Activated T-helper 2 cell treated with anti-CD3 and anti-CD28 coated beads, Interferon-gamma antibody, Interleukin-2, Interleukin-4, amounts not matched to agents 10 μg/mL and 5 μg/mL and 100 μg/mL, durations not matched to agents 14 hours and 24 hours and 36 hours (primary cell): ENCODE measurements at regions of chr9 and their contacts with region 1.

Region 1: GRCh38 chr9:122810306-122810946 is 10.5 kb downstream of the OR1K1 start:
- DNase-seq: peak; percentile 52
- H3K4me3 Mint-ChIP-seq: no peak overlapping the region
- H3K27ac Mint-ChIP-seq: no peak overlapping the region
- H3K4me1 Mint-ChIP-seq: peaks cover 30% of the 10 kb centered on the region
- H3K27me3 Mint-ChIP-seq: peaks cover 2% of the 10 kb centered on the region

Region 2: GRCh38 chr9:122402403-122402871 is 408.0 kb before region 1 on chr9:
- intact Hi-C with region 1: loop called (anchors 1 kb)
- DNase-seq: peak; percentile 32
- H3K4me3 Mint-ChIP-seq: no peak overlapping the region
- H3K27ac Mint-ChIP-seq: peak overlapping the region; percentile 83
- H3K4me1 Mint-ChIP-seq: peaks cover 23% of the 10 kb centered on the region
- H3K27me3 Mint-ChIP-seq: no peaks in the 10 kb centered on the region

Region 3: DNA sequence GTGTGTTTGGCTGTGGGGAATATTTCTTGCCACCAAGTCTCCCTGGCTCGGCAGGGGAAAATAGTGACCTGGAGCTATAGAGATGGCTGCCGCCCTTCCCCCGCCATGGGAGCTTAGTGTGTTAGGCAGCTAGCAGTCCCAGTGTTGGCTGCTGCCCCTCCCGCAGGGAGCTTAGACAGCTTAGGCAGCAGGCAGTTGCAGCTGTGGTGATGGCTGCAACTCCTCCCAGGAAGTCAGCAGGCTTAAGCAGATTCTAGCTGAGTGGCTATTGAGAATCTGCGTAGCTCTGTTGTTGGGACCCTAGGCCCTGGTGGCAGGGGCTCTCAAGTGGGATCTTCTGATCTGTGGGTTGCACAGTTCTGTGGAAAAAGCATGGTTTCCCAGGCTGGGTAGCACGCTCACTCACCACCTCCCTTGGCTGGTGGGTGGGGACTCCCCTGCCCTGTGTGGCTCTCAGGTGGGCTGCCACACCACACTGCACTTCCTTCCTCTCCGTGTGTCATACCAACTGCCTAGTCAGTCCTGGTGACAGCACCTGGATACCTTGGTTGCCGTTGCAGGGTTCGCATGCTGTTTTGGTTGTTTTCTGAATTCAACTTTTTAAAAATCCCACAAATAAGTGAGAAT is 248.2 kb before region 1 on chr9:
- intact Hi-C with region 1: loop called (anchors 5 kb)
- DNase-seq: no peak
- H3K4me3 Mint-ChIP-seq: no peak overlapping the region
- H3K27ac Mint-ChIP-seq: no peak overlapping the region
- H3K4me1 Mint-ChIP-seq: peaks cover 9% of the 10 kb centered on the region
- H3K27me3 Mint-ChIP-seq: peaks cover 7% of the 10 kb centered on the region

Region 4: DNA sequence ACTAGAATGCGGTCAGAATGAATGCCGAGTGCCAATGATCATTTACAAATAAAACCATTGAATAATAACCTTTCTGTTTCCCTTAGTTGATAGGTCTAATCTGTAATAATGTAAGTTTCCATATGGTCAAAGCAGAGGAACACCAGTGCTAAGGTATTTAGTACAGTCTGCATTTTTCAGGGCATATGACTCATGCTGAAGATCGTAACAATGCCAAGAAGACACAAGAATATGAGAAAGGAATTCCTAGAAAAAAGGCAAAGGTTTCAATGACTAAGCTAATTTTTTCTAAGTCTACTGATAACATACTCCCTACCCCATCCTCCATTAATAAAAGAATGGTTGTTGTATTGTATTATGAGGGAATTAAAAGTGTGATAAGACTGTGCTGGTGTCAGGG is 230.1 kb before region 1 on chr9:
- intact Hi-C with region 1: no loop called
- DNase-seq: no peak
- H3K4me3 Mint-ChIP-seq: no peak overlapping the region
- H3K27ac Mint-ChIP-seq: no peak overlapping the region
- H3K4me1 Mint-ChIP-seq: no peaks in the 10 kb centered on the region
- H3K27me3 Mint-ChIP-seq: no peaks in the 10 kb centered on the region

Region 5: GRCh38 chr9:123225374-123225813 is 415.0 kb after region 1 on chr9:
- intact Hi-C with region 1: loop called (anchors 5 kb)
- DNase-seq: peak; percentile 27
- H3K4me3 Mint-ChIP-seq: no peak overlapping the region
- H3K27ac Mint-ChIP-seq: peak overlapping the region; percentile 69
- H3K4me1 Mint-ChIP-seq: peaks cover 29% of the 10 kb centered on the region
- H3K27me3 Mint-ChIP-seq: no peaks in the 10 kb centered on the region